ENCODE measurements at regions of chr3 and their contacts with region 1.

Region 1: GRCh38 chr3:113912552-113913236 is 35.1 kb upstream of the ZDHHC23 start:
- DNase-seq: peak; percentile 36
- H3K4me3 Mint-ChIP-seq: no peak overlapping the region
- H3K27ac Mint-ChIP-seq: no peak overlapping the region
- H3K4me1 Mint-ChIP-seq: peaks cover 4% of the 10 kb centered on the region
- H3K27me3 Mint-ChIP-seq: no peaks in the 10 kb centered on the region

Region 2: GRCh38 chr3:113070681-113071143 is 842.0 kb before region 1 on chr3:
- CTCF ChIA-PET with region 1: no interaction called
- POLR2A ChIA-PET with region 1: no interaction called
- intact Hi-C with region 1: no loop called
- DNase-seq: no peak
- H3K4me3 Mint-ChIP-seq: no peak overlapping the region
- H3K27ac Mint-ChIP-seq: no peak overlapping the region
- H3K4me1 Mint-ChIP-seq: no peaks in the 10 kb centered on the region
- H3K27me3 Mint-ChIP-seq: no peaks in the 10 kb centered on the region

Region 3: DNA sequence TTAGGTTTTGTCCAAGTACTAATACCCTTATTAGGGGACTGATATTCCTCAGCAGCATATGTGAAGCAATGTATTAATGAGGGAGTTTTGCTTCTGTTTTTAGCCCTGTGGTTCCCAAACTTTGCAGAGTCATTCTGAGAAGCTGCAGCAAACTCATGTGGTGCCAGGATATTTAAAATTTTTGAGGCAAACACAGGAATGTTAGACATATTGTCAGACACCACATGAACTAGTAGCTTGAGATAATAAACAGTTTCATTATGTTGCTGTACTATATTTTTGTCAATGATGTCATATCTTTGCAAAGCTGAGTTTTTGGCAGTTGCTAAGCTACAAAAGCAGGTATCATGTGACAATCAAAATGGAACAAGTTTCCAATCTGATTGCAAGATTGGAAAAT is 129.2 kb before region 1 on chr3:
- CTCF ChIA-PET with region 1: no interaction called
- POLR2A ChIA-PET with region 1: no interaction called
- intact Hi-C with region 1: no loop called
- DNase-seq: no peak
- H3K4me3 Mint-ChIP-seq: no peak overlapping the region
- H3K27ac Mint-ChIP-seq: no peak overlapping the region
- H3K4me1 Mint-ChIP-seq: peaks cover 3% of the 10 kb centered on the region
- H3K27me3 Mint-ChIP-seq: no peaks in the 10 kb centered on the region

Region 4: GRCh38 chr3:113838631-113839209 is 74.0 kb before region 1 on chr3 and contains the start of gene GRAMD1C:
- CTCF ChIA-PET with region 1: interaction called, 27 read pairs
- POLR2A ChIA-PET with region 1: no interaction called
- intact Hi-C with region 1: loop called (anchors 1 kb)
- DNase-seq: peak; percentile 89
- H3K4me3 Mint-ChIP-seq: peak within 1 kb of the TSS; percentile 68
- H3K27ac Mint-ChIP-seq: no peak within 1 kb of the TSS
- H3K4me1 Mint-ChIP-seq: peaks cover 6% of the 10 kb centered on the region
- H3K27me3 Mint-ChIP-seq: no peaks in the 10 kb centered on the region
- total RNA-seq, gene GRAMD1C: 0.64 to 1.2 TPM

Region 5: GRCh38 chr3:113844622-113845222 is 68.0 kb before region 1 on chr3:
- CTCF ChIA-PET with region 1: interaction called, 29 read pairs
- POLR2A ChIA-PET with region 1: no interaction called
- intact Hi-C with region 1: loop called (anchors 1 kb)
- DNase-seq: no peak
- H3K4me3 Mint-ChIP-seq: no peak overlapping the region
- H3K27ac Mint-ChIP-seq: no peak overlapping the region
- H3K4me1 Mint-ChIP-seq: no peaks in the 10 kb centered on the region
- H3K27me3 Mint-ChIP-seq: no peaks in the 10 kb centered on the region

Region 6: GRCh38 chr3:113927556-113927955 is 14.9 kb after region 1 on chr3:
- CTCF ChIA-PET with region 1: no interaction called
- POLR2A ChIA-PET with region 1: no interaction called
- intact Hi-C with region 1: no loop called
- DNase-seq: no peak
- H3K4me3 Mint-ChIP-seq: no peak overlapping the region
- H3K27ac Mint-ChIP-seq: no peak overlapping the region
- H3K4me1 Mint-ChIP-seq: no peaks in the 10 kb centered on the region
- H3K27me3 Mint-ChIP-seq: peaks cover 11% of the 10 kb centered on the region

Region 7: GRCh38 chr3:114442246-114442645 is 529.6 kb after region 1 on chr3:
- CTCF ChIA-PET with region 1: no interaction called
- POLR2A ChIA-PET with region 1: no interaction called
- intact Hi-C with region 1: no loop called
- DNase-seq: no peak
- H3K4me3 Mint-ChIP-seq: no peak overlapping the region
- H3K27ac Mint-ChIP-seq: no peak overlapping the region
- H3K4me1 Mint-ChIP-seq: peaks cover 5% of the 10 kb centered on the region
- H3K27me3 Mint-ChIP-seq: no peaks in the 10 kb centered on the region